Left ventricle myocardium inferior (tissue), 1 donor: ENCODE measurements at regions of chr1 and their contacts with region 1.

Region 1: DNA sequence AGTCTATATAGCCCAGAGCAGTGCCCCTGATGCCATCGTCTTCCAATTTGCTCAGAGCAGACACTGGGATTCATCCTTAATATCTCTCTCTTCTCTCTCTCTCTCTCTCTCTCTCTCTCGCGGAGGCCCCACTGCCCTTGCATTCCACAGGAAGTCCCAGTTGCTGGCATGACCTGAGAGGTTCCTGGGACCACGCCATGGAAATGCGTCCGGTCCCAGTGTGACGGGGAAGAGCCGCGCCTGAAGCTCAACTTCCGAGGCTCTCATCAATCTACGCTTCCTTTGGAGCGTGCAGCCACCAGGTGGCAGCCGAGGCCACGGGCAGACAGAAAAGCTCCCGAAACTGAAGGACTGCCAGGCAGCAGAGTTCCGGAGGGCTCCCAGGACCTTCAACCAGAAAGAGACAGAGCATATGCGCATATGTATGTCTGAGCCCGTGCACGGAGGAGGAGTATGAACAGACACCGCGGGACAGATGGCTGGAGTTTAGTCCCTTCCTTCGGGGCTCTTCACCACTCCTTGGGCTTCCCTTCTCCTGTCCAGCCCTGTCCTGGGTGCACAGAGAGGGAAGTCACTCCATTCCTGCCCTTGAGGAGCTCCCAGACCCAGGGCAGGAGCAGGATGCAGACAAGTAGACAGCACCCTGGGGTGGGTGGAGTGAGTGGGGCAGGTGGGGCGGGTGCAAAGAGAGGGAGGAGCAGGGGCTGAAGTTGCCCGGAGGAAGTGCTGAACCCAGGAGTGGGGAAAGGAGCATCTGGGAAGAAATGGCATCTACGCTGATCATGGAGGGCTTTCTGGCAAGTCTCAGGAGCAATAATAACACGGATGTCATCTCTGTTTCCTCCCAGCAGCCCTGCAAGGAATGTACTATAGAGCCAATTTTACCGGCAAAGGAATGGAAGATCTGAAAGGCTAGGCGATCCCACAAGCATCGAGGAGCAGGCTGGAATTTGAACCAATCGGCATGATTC is 10.5 kb downstream of the PDZK1IP1 start:
- DNase-seq: peak; percentile 87
- H3K4me3 ChIP-seq: peak overlapping the region; percentile 60
- H3K27ac ChIP-seq: no peak overlapping the region
- H3K4me1 ChIP-seq: peaks cover 16% of the 10 kb centered on the region
- H3K27me3 ChIP-seq: peaks cover 44% of the 10 kb centered on the region
- CTCF ChIP-seq: peak; percentile 92

Region 2: DNA sequence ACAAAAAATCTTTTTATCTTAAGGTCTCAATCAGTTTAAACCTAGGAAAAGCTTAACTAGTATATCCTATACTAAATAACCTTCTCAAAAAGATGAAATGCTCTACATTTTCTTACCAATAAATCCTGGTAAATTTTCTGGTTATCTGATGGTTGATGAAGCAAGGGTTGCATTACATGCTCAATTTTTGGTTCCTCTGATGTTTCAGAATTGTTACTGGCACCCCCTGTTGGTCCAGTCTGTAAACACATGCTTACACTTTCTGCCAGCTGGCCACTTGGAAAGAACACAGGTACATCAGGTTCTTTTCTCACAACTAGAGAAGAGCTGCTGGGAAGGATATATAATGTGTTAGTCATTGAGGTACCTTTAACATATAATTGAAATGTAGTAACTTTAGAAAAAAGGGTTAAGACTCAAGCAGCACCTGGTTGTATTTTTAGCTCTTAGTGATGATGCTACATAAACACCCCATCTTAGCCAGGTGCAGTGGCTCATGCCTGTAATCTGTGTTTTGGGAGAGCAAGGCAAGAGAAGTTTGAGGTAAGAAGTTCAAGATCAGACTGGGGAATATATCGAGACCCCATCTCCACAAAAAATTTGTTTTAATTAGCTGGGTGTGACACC is 83.6 kb after region 1 on chr1:
- intact Hi-C with region 1: loop called (anchors 5 kb)
- DNase-seq: no peak
- H3K4me3 ChIP-seq: no peak overlapping the region
- H3K27ac ChIP-seq: no peak overlapping the region
- H3K4me1 ChIP-seq: no peaks in the 10 kb centered on the region
- H3K27me3 ChIP-seq: no peaks in the 10 kb centered on the region
- CTCF ChIP-seq: peak; percentile 69

Region 3: GRCh38 chr1:47378147-47378546 is 198.8 kb after region 1 on chr1:
- intact Hi-C with region 1: no loop called
- DNase-seq: no peak
- H3K4me3 ChIP-seq: no peak overlapping the region
- H3K27ac ChIP-seq: no peak overlapping the region
- H3K4me1 ChIP-seq: peaks cover 3% of the 10 kb centered on the region
- H3K27me3 ChIP-seq: no peaks in the 10 kb centered on the region
- CTCF ChIP-seq: no peak

Region 4: DNA sequence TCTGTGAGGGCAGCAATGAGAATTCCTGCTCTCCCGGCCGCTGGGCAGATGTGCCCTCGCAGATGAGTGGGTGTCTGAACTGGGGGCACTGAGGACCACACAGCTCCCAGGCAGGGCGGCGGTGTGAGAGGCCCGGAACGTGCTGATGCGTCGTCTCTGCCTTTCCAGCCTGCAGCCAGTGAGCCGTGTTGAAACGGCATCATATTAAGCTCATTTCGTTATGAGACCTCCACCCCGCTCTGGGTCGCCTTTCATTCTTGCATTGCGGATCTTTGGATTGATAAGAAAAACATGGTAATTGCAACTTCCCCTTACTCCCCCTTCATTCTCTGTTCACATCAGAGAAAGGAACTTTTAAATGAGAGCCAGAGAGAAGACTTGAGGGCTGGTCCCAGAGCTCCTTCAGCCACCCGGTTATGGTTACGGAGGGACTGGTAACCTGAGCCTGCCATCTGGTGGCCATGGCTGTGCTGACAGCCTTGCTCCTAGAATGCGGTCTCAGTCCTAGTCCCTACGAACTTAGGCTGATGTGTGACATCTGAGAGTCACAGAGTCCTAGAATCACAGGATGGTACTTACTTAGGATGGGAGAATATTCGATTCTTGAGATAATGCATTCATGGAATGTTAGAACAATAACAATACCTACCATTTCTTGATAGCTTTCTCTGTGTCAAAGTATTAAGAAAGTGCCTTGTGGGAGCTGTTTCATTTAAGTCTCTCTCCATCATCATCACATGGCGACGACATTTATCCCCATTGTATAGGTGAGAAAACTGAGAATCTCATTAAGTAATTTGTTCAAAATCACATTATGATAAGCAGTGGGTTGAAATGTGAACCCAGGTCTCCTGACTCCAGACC is 546.9 kb after region 1 on chr1:
- intact Hi-C with region 1: loop called (anchors 10 kb)
- DNase-seq: peak; percentile 73
- H3K4me3 ChIP-seq: peak overlapping the region; percentile 51
- H3K27ac ChIP-seq: no peak overlapping the region
- H3K4me1 ChIP-seq: peaks cover 16% of the 10 kb centered on the region
- H3K27me3 ChIP-seq: peaks cover 66% of the 10 kb centered on the region
- CTCF ChIP-seq: peak; percentile 94